ENCODE measurements at regions of chr11 and their contacts with region 1.

Region 1: GRCh38 chr11:111601979-111602864 is at the start of gene SIK2:
- DNase-seq: peak; percentile 94
- ATAC-seq: peak; percentile 87
- H3K4me3 Mint-ChIP-seq: peak within 1 kb of the TSS; percentile 83
- H3K27ac Mint-ChIP-seq: peak within 1 kb of the TSS; percentile 91
- H3K4me1 Mint-ChIP-seq: peaks cover 31% of the 10 kb centered on the region
- H3K27me3 Mint-ChIP-seq: peaks cover 2% of the 10 kb centered on the region
- total RNA-seq, gene SIK2: 6.0 to 10.9 TPM

Region 2: GRCh38 chr11:111408789-111409727 is 193.2 kb before region 1 on chr11:
- CTCF ChIA-PET with region 1: no interaction called
- POLR2A ChIA-PET with region 1: no interaction called
- intact Hi-C with region 1: no loop called
- DNase-seq: no peak
- ATAC-seq: no peak
- H3K4me3 Mint-ChIP-seq: no peak overlapping the region
- H3K27ac Mint-ChIP-seq: no peak overlapping the region
- H3K4me1 Mint-ChIP-seq: peaks cover 25% of the 10 kb centered on the region
- H3K27me3 Mint-ChIP-seq: no peaks in the 10 kb centered on the region

Region 3: DNA sequence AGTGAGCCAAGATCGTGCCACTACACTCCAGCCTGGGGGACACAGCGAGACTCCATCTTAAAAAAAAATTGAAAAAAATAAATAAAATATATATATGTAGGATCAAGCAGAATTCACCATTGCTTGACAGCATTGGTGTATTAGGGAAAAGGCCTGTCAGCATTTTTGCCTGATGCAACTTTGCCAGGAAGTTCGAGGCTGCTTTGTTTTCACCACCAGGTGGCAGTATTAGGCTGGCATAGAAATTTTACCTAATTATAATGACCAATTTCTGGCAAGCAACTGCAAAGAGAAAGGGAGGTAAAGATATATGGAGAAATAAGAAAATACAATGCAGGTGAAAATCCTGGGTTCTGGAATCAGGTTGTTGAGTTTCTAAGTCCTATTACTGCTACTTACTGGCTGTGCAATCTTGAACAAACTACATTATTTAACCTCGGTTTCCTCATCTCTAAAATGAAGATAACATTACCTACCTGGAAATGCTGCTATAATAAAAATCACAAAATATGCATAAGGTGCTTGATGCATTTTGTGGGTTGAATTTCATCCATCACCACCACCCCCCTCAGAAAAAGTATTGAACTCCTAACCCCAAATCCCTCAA is 37.0 kb before region 1 on chr11:
- CTCF ChIA-PET with region 1: no interaction called
- POLR2A ChIA-PET with region 1: no interaction called
- intact Hi-C with region 1: loop called in 1 of 2 experiments (anchors 2 kb)
- DNase-seq: peak; percentile 76
- ATAC-seq: peak; percentile 44
- H3K4me3 Mint-ChIP-seq: no peak overlapping the region
- H3K27ac Mint-ChIP-seq: no peak overlapping the region
- H3K4me1 Mint-ChIP-seq: no peaks in the 10 kb centered on the region
- H3K27me3 Mint-ChIP-seq: no peaks in the 10 kb centered on the region

Region 4: GRCh38 chr11:111707039-111707690 is 104.9 kb after region 1 on chr11:
- CTCF ChIA-PET with region 1: no interaction called
- POLR2A ChIA-PET with region 1: interaction called, 10 read pairs
- intact Hi-C with region 1: no loop called
- DNase-seq: no peak
- ATAC-seq: no peak
- H3K4me3 Mint-ChIP-seq: no peak overlapping the region
- H3K27ac Mint-ChIP-seq: no peak overlapping the region
- H3K4me1 Mint-ChIP-seq: no peaks in the 10 kb centered on the region
- H3K27me3 Mint-ChIP-seq: no peaks in the 10 kb centered on the region

Region 5: GRCh38 chr11:111841370-111842053 is 239.3 kb after region 1 on chr11:
- CTCF ChIA-PET with region 1: interaction called, 6 read pairs
- POLR2A ChIA-PET with region 1: no interaction called
- intact Hi-C with region 1: loop called (anchors 1 to 2 kb)
- DNase-seq: peak; percentile 94
- ATAC-seq: peak; percentile 95
- H3K4me3 Mint-ChIP-seq: no peak overlapping the region
- H3K27ac Mint-ChIP-seq: no peak overlapping the region
- H3K4me1 Mint-ChIP-seq: peaks cover 9% of the 10 kb centered on the region
- H3K27me3 Mint-ChIP-seq: no peaks in the 10 kb centered on the region

Region 6: GRCh38 chr11:111926505-111927391 is 324.5 kb after region 1 on chr11:
- CTCF ChIA-PET with region 1: no interaction called
- POLR2A ChIA-PET with region 1: no interaction called
- intact Hi-C with region 1: loop called in 1 of 2 experiments (anchors 1 kb)
- DNase-seq: peak; percentile 96
- ATAC-seq: peak; percentile 91
- H3K4me3 Mint-ChIP-seq: peak overlapping the region; percentile 75
- H3K27ac Mint-ChIP-seq: peak overlapping the region; percentile 92
- H3K4me1 Mint-ChIP-seq: peaks cover 18% of the 10 kb centered on the region
- H3K27me3 Mint-ChIP-seq: no peaks in the 10 kb centered on the region

Region 7: GRCh38 chr11:112118176-112118575 is 516.0 kb after region 1 on chr11:
- CTCF ChIA-PET with region 1: no interaction called
- POLR2A ChIA-PET with region 1: no interaction called
- intact Hi-C with region 1: no loop called
- DNase-seq: no peak
- ATAC-seq: peak; percentile 37
- H3K4me3 Mint-ChIP-seq: no peak overlapping the region
- H3K27ac Mint-ChIP-seq: no peak overlapping the region
- H3K4me1 Mint-ChIP-seq: peaks cover 16% of the 10 kb centered on the region
- H3K27me3 Mint-ChIP-seq: no peaks in the 10 kb centered on the region

Region 8: DNA sequence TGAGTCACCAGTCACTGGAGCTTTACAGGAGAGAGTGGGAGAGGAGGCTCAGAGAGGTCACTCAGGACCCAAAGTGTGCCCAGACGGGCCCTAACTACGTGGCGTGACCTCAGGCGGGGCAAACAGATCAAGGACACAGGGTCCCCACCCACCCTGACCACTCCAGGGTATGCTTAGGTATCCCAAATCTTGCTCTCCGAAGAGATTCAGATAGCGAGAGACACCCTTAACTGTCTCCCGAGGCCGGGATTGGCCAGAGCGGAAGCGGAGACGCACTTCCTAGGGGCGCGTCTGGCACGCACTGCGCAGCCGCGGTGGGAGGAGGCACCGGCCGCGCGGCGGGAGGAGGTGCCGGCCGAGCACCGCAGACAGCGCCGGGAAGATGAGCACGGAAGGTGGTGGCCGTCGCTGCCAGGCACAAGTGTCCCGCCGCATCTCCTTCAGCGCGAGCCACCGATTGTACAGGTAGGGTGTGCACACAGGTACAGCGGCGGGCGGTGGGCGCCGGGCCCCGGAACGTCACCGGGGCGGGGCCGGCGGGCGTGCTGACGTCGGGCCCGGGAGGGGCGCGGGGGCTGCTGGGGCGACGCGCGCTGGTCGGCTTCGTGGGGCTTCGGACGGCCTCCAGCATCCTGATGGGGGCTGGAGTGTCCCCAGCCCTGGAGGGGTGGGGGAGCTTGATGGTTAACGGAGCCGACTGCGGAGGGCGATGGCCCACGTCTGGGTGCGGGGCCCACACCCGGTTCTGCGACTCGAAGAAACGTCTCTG is 624.0 kb after region 1 on chr11 and contains the start of gene PTS:
- CTCF ChIA-PET with region 1: no interaction called
- POLR2A ChIA-PET with region 1: no interaction called
- intact Hi-C with region 1: loop called in 1 of 2 experiments (anchors 2 kb)
- DNase-seq: peak; percentile 90
- ATAC-seq: peak; percentile 97
- H3K4me3 Mint-ChIP-seq: peak within 1 kb of the TSS; percentile 78
- H3K27ac Mint-ChIP-seq: peak within 1 kb of the TSS; percentile 94
- H3K4me1 Mint-ChIP-seq: peaks cover 19% of the 10 kb centered on the region
- H3K27me3 Mint-ChIP-seq: no peaks in the 10 kb centered on the region
- total RNA-seq, gene PTS: 17.4 to 23.8 TPM